Mammary epithelial cell (primary cell): ENCODE measurements at regions of chr22 and their contacts with region 1.

Region 1: DNA sequence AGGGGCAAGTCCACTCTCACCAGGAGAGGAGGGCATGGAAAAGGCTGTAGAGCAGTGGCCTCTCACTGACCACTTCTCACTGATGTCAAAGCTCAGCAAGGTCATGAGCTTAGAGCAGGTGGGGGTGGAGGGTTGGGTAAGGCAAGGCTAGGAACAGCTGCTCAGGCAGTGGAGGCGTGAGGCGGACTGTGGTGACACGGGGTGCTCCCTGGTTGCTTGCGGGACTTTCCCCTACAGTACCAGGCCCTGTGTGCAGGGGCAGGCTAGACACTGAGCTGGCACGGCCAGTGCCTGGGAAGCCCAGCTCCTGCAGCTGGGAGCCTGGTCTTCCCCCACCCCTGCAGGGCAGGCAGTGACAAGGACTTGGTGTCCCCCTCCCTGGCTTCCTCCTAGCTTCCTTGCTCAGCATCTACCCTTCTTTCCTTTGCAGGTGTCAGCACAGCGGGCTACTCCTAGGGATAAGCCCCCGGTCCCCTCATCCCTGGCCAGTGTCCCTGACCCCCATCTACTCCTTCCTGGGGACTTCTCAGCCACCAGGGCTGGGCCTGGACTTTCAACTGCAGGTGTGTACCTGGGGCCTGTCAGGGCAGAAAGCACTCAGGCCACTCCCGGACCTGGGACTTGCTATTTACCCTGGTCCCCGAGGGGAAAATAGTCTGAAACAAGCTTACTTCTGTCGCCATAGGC is 45.6 kb downstream of the PISD start:
- DNase-seq: no peak
- H3K4me3 ChIP-seq: no peak overlapping the region
- H3K27ac ChIP-seq: no peak overlapping the region
- H3K4me1 ChIP-seq: no peaks in the 10 kb centered on the region
- H3K27me3 ChIP-seq: no peaks in the 10 kb centered on the region
- CTCF ChIP-seq: no peak

Region 2: DNA sequence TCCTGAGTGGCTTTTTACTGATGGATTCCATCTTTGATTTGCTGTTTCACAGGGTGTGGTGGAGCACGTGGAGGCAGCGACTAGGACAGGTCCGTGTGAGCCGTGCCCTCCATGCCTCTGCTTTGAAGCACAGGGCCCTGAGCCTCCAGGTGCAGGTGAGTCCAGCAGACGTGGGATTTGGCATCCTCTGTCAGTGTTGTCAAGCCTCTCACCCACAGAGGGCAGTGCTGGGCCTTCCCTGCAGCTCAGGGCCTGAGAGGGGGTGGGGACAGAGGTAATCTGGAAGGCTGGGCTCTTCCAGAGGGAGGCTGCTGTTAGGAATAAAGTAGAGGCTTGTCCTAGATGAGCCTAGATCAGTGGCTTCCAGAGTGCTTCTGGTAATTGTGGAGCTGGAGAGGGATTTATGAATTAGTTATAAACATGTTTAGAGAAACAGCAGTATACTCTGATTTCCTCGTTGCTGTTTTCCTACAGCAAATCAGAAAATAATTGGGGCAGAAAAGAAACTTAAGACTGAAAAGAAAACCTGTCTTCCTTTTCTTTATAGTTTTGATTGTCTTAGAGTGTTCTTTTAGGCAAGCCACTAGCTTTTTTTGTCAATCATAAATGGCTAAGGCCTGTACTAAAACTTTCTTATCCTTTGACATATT is 55.1 kb before region 1 on chr22:
- CTCF ChIA-PET with region 1: no interaction called
- dilution Hi-C with region 1: no loop called
- in situ Hi-C with region 1: no loop called
- intact Hi-C with region 1: loop called (anchors 5 kb)
- DNase-seq: peak; percentile 70
- H3K4me3 ChIP-seq: no peak overlapping the region
- H3K27ac ChIP-seq: no peak overlapping the region
- H3K4me1 ChIP-seq: no peaks in the 10 kb centered on the region
- H3K27me3 ChIP-seq: no peaks in the 10 kb centered on the region
- CTCF ChIP-seq: peak; percentile 76 to 94